Esophagus muscularis mucosa (tissue), 4 donors: ENCODE measurements at regions of chr6 and their contacts with region 1.

Region 1: GRCh38 chr6:1396952-1397868 is 7.8 kb downstream of the FOXF2 start:
- DNase-seq: peak; percentile 96
- H3K4me3 ChIP-seq: peak overlapping the region; percentile 69 to 86 (median 78)
- H3K27ac ChIP-seq: peak overlapping the region; percentile 90 to 97 (median 94)
- H3K4me1 ChIP-seq: peaks cover 7 to 70% (median 65%) of the 10 kb centered on the region in 4 donors
- H3K27me3 ChIP-seq: peaks cover 0 to 34% (median 0%) of the 10 kb centered on the region in 4 donors
- CTCF ChIP-seq: peak; percentile 94 to 98 (median 94)
- EP300 ChIP-seq: peak; percentile 61
- POLR2A ChIP-seq: no peak

Region 2: GRCh38 chr6:599576-600448 is 797.4 kb before region 1 on chr6:
- intact Hi-C with region 1: loop called (anchors 5 kb)
- DNase-seq: no peak
- H3K4me3 ChIP-seq: no peak overlapping the region
- H3K27ac ChIP-seq: peak overlapping the region in 2 of 4 donors; percentile 36 to 76
- H3K4me1 ChIP-seq: peaks cover 0 to 8% (median under 1%) of the 10 kb centered on the region in 4 donors
- H3K27me3 ChIP-seq: no peaks in the 10 kb centered on the region
- CTCF ChIP-seq: no peak
- EP300 ChIP-seq: no peak
- POLR2A ChIP-seq: no peak

Region 3: GRCh38 chr6:1325461-1326309 is 71.5 kb before region 1 on chr6:
- intact Hi-C with region 1: no loop called
- DNase-seq: peak; percentile 91
- H3K4me3 ChIP-seq: no peak overlapping the region
- H3K27ac ChIP-seq: peak overlapping the region; percentile 55 to 62 (median 60)
- H3K4me1 ChIP-seq: peaks cover 0 to 65% (median 62%) of the 10 kb centered on the region in 4 donors
- H3K27me3 ChIP-seq: no peaks in the 10 kb centered on the region
- CTCF ChIP-seq: no peak
- EP300 ChIP-seq: no peak
- POLR2A ChIP-seq: no peak

Region 4: GRCh38 chr6:1604158-1605030 is 207.2 kb after region 1 on chr6:
- intact Hi-C with region 1: no loop called
- DNase-seq: no peak
- H3K4me3 ChIP-seq: peak overlapping the region; percentile 57 to 68 (median 60)
- H3K27ac ChIP-seq: no peak overlapping the region
- H3K4me1 ChIP-seq: peaks cover 21 to 45% (median 38%) of the 10 kb centered on the region in 4 donors
- H3K27me3 ChIP-seq: peaks cover 11 to 88% (median 39%) of the 10 kb centered on the region in 4 donors
- CTCF ChIP-seq: peak; percentile 86 to 97 (median 95)
- EP300 ChIP-seq: no peak
- POLR2A ChIP-seq: no peak